AG04450 (cell line): ENCODE measurements at regions of chr1 and their contacts with region 1.

Region 1: DNA sequence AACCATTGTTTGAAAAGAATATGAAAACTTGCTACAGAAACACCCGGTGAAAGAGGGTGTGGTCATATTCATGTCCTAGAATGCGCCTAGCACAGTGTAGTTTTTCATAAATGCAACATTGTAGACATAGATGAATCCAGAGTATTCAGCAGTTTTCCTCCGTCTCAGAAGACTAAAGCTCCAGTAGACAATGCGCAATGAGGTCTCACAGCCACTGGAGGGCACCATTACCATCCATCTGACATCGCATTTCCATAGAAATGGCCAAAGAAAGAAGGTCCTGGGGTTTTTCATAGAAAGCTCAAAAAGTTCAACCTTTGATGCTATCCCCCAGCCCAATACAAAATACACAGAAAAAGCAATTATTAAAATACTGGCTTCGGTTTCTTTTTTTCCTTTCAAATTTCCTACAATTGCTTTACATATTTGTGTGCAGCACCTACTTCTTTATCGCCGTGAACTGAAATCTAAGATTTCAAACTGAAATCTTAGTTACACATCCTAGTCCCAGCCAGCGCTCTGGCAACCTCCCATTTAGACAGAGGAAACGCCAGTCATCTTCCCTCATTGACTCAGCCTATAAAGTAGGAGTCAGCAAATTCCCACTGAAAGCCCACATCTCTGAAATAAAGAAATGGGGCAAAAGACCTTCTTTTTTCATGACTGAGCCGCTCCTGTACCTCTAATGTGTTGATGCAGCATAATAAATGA is 3.9 kb upstream of the CD58 start:
- DNase-seq: no peak
- H3K4me3 ChIP-seq: no peak overlapping the region
- H3K27ac ChIP-seq: no peak overlapping the region
- H3K27me3 ChIP-seq: peaks cover 29% of the 10 kb centered on the region
- CTCF ChIP-seq: peak; percentile 97

Region 2: GRCh38 chr1:116586741-116587143 is 12.0 kb after region 1 on chr1:
- CTCF ChIA-PET with region 1: interaction called, 26 read pairs
- POLR2A ChIA-PET with region 1: no interaction called
- DNase-seq: no peak
- H3K4me3 ChIP-seq: no peak overlapping the region
- H3K27ac ChIP-seq: no peak overlapping the region
- H3K27me3 ChIP-seq: no peaks in the 10 kb centered on the region
- CTCF ChIP-seq: no peak

Region 3: GRCh38 chr1:116671912-116672311 is 97.2 kb after region 1 on chr1:
- CTCF ChIA-PET with region 1: interaction called, 12 read pairs
- POLR2A ChIA-PET with region 1: no interaction called
- DNase-seq: no peak
- H3K4me3 ChIP-seq: no peak overlapping the region
- H3K27ac ChIP-seq: no peak overlapping the region
- H3K27me3 ChIP-seq: peaks cover 6% of the 10 kb centered on the region
- CTCF ChIP-seq: no peak

Region 4: DNA sequence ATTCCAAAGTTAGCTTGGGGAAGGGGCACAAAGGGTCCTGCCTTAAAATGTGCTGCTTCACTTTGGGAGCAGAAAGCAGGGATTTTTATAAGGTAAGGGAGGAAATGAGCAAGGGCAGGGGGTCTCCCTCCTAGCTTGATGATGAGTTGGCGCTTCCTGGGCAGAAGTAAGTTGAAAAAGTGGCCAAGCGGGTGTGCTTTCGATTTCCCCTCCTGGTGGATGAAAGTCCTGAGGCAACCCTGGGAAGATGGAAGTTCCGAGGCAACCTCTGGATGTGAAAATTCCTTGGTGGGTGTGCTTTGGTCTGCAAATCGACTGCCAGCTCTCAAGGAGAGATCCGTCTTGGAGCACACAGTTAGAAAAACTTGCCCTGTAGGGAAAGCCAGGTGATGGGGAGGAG is 137.8 kb after region 1 on chr1:
- CTCF ChIA-PET with region 1: no interaction called
- POLR2A ChIA-PET with region 1: no interaction called
- DNase-seq: no peak
- H3K4me3 ChIP-seq: no peak overlapping the region
- H3K27ac ChIP-seq: no peak overlapping the region
- H3K27me3 ChIP-seq: no peaks in the 10 kb centered on the region
- CTCF ChIP-seq: no peak

Region 5: GRCh38 chr1:116902032-116902738 is 327.4 kb after region 1 on chr1:
- CTCF ChIA-PET with region 1: no interaction called
- POLR2A ChIA-PET with region 1: no interaction called
- DNase-seq: no peak
- H3K4me3 ChIP-seq: no peak overlapping the region
- H3K27ac ChIP-seq: no peak overlapping the region
- H3K27me3 ChIP-seq: peaks cover 3% of the 10 kb centered on the region
- CTCF ChIP-seq: no peak